ENCODE measurements at regions of chr2 and their contacts with region 1.

Region 1: DNA sequence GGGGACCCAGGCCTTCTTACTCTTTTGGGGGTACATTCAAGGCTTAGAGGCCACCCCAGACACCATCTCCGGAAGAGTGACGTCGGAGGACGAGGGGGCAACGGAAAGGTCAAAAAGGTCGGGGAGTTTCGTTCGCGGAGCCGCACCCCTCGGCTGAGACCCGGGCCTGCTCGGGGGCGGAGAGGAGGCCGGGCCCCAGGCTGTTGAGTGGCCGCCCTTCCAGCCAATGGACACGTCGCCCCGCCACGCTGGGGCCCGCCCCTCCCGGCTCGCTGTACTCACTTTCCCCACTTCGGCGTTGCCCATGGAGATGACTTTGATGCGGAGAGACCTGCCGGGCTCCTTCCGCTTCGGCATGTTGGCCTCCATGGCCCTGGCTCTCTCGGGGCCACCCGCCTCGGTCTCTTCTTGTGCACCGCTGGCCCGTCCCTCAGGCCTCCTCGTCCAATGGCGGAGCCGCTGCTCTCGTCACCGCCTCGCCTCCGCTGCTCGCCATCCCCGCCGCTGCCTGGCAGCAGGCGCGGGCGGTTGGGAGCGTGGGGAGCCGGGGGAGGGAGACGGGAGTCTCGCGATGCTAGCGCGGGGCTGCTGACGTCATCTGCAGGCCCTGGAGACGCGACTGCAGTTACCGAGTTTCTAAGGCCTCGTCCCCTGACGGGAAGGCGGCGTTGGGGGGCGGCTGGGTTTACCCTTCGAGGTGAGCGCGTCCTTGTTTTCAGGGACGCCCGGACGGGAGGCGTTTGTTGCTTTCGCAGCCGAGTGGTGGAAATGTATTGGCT is at the start of gene DNAJC27:
- DNase-seq: peak; percentile 99
- H3K4me3 ChIP-seq: peak within 1 kb of the TSS; percentile 87 to 93
- H3K27ac ChIP-seq: peak within 1 kb of the TSS; percentile 94 to 95
- H3K4me1 ChIP-seq: peaks cover 5 to 12% of the 10 kb centered on the region in 2 experiments; a peak in 3 of 4 replicates
- H3K27me3 ChIP-seq: no peaks in the 10 kb centered on the region
- CTCF ChIP-seq: no peak
- EP300 ChIP-seq: no peak; a peak in 1 of 4 replicates
- RAD21 ChIP-seq: no peak
- polyA plus RNA-seq, gene DNAJC27: 2.4 and 3.6 TPM in 2 replicates

Region 2: DNA sequence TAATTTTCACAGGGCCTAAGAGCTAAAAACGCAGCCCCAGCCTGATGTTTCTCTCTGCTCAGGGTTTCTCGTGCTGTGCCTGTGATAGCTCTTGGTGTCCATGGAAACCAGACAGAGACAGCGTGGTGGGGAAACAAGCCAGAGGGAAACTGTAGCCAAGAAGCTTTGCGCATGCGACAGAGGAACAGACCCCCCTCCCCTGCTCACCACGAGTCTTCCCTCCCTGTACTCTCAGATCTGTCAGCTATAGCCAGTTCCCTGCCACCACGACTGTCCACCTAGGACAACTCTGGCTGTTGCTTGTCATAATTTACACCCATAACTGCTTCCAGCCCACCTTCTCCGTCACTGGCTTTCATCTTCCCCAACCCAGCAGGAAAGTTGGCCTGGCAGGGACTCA is 13.2 kb after region 1 on chr2:
- CTCF ChIA-PET with region 1: interaction called, 55 read pairs
- POLR2A ChIA-PET with region 1: interaction called, 5 read pairs
- DNase-seq: peak; percentile 80
- H3K4me3 ChIP-seq: no peak overlapping the region
- H3K27ac ChIP-seq: peak overlapping the region in 1 of 2 experiments; percentile 85; a peak in 2 of 4 replicates
- H3K4me1 ChIP-seq: peaks cover 0 to 23% of the 10 kb centered on the region in 2 experiments; a peak in 2 of 4 replicates
- H3K27me3 ChIP-seq: no peaks in the 10 kb centered on the region
- CTCF ChIP-seq: no peak
- EP300 ChIP-seq: no peak
- RAD21 ChIP-seq: no peak; the same call in 1 of the 2 replicates

Region 3: DNA sequence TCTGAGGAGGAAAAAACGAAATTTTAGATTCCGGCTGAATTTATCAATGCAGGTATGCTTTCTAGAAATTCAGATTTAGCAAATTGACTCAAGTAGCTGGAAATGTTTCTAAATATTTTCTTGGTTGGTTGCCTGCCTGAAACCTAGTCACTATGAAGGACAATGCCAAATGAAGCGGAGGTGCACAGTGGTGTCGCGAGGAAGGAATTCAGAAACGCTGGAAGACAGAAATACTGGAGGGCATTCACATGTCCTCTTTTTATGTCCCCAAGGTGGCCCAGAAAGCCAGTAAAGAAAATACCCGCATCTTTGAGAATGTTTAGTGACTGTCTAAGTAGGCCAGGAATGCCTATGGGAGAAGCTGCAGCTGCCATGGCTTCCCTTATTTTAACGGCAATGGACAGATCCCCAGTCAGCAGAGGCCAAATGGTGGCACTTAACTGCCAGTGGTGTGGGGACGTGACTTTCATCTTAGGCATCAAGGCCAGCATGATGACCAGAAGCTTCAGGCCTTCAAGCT is 54.3 kb after region 1 on chr2:
- CTCF ChIA-PET with region 1: interaction called, 22 read pairs
- POLR2A ChIA-PET with region 1: interaction called, 4 read pairs
- DNase-seq: no peak
- H3K4me3 ChIP-seq: no peak overlapping the region
- H3K27ac ChIP-seq: no peak overlapping the region
- H3K4me1 ChIP-seq: peaks cover 0 to 3% of the 10 kb centered on the region in 2 experiments; a peak in 1 of 4 replicates
- H3K27me3 ChIP-seq: no peaks in the 10 kb centered on the region
- CTCF ChIP-seq: no peak
- EP300 ChIP-seq: no peak
- RAD21 ChIP-seq: no peak

Region 4: GRCh38 chr2:25072606-25073005 is 100.9 kb after region 1 on chr2:
- CTCF ChIA-PET with region 1: interaction called, 11 read pairs
- POLR2A ChIA-PET with region 1: no interaction called
- DNase-seq: no peak
- H3K4me3 ChIP-seq: no peak overlapping the region
- H3K27ac ChIP-seq: no peak overlapping the region
- H3K4me1 ChIP-seq: peaks cover 3 to 22% of the 10 kb centered on the region in 2 experiments; a peak in 3 of 4 replicates
- H3K27me3 ChIP-seq: no peaks in the 10 kb centered on the region
- CTCF ChIP-seq: no peak
- EP300 ChIP-seq: no peak
- RAD21 ChIP-seq: no peak

Region 5: GRCh38 chr2:25104736-25105135 is 133.0 kb after region 1 on chr2:
- CTCF ChIA-PET with region 1: interaction called, 11 read pairs
- POLR2A ChIA-PET with region 1: no interaction called
- DNase-seq: no peak
- H3K4me3 ChIP-seq: no peak overlapping the region
- H3K27ac ChIP-seq: peak overlapping the region in 1 of 2 experiments; percentile 62; a peak in 1 of 4 replicates
- H3K4me1 ChIP-seq: peaks cover 0 to 17% of the 10 kb centered on the region in 2 experiments; a peak in 2 of 4 replicates
- H3K27me3 ChIP-seq: no peaks in the 10 kb centered on the region
- CTCF ChIP-seq: no peak
- EP300 ChIP-seq: no peak
- RAD21 ChIP-seq: no peak

Region 6: GRCh38 chr2:25159949-25160348 is 188.2 kb after region 1 on chr2:
- CTCF ChIA-PET with region 1: interaction called, 16 read pairs
- POLR2A ChIA-PET with region 1: no interaction called
- DNase-seq: peak; percentile 91
- H3K4me3 ChIP-seq: no peak overlapping the region
- H3K27ac ChIP-seq: no peak overlapping the region
- H3K4me1 ChIP-seq: peaks cover 0 to 12% of the 10 kb centered on the region in 2 experiments; a peak in 1 of 4 replicates
- H3K27me3 ChIP-seq: peaks cover 9% of the 10 kb centered on the region; the same call in 1 of the 2 replicates
- CTCF ChIP-seq: peak; percentile 14; the same call in 1 of the 2 replicates
- EP300 ChIP-seq: no peak
- RAD21 ChIP-seq: no peak

Measured in SK-N-SH (cell line).